MCF 10A (cell line): ENCODE measurements at regions of chr9 and their contacts with region 1.

Region 1: DNA sequence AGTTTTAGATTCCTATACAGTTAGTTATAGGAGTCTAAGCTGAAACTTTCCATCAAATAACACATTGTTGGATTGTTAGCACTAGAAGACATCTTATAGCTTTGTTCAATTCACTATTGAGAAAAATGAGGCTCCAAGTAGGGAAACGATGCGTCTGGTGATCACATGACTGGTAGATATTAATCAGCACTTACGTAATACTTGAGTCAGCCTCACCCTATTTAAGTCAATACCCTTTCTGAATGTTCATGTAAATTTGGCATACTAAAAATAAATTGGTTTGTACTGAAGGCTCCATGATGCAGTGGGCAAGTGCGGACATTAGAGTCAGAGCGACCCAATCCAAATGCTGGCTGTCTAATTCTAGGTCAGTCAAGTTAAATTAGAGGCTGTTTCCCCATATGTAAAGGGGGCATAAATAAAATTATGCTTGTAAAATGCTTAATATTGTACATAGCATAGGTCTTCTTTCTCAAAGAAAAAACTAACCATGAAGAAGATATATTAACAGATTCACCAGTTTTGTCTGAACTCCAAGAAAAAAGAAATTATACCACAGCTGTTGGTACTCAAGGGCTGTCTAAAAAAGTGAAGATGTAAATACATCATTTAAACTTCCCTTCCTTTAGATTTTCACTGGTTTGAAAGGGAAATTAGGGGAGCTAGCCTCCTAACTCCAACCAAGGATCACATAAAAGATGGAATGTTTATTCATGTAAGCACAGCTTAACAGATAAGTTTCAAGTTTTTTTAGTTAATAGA is 406.6 kb upstream of the TLE4 start:
- DNase-seq: peak; percentile 69
- H3K4me3 Mint-ChIP-seq: no peak overlapping the region
- H3K27ac Mint-ChIP-seq: peak overlapping the region; percentile 57
- H3K4me1 Mint-ChIP-seq: peaks cover 18% of the 10 kb centered on the region
- H3K27me3 Mint-ChIP-seq: no peaks in the 10 kb centered on the region
- CTCF ChIP-seq: no peak

Region 2: GRCh38 chr9:79026316-79026715 is 138.9 kb before region 1 on chr9:
- CTCF ChIA-PET with region 1: no interaction called
- POLR2A ChIA-PET with region 1: interaction called, 11 read pairs
- intact Hi-C with region 1: no loop called
- DNase-seq: peak; percentile 67
- H3K4me3 Mint-ChIP-seq: peak overlapping the region; percentile 10
- H3K27ac Mint-ChIP-seq: peak overlapping the region; percentile 78
- H3K4me1 Mint-ChIP-seq: peaks cover 45% of the 10 kb centered on the region
- H3K27me3 Mint-ChIP-seq: no peaks in the 10 kb centered on the region
- CTCF ChIP-seq: no peak

Region 3: DNA sequence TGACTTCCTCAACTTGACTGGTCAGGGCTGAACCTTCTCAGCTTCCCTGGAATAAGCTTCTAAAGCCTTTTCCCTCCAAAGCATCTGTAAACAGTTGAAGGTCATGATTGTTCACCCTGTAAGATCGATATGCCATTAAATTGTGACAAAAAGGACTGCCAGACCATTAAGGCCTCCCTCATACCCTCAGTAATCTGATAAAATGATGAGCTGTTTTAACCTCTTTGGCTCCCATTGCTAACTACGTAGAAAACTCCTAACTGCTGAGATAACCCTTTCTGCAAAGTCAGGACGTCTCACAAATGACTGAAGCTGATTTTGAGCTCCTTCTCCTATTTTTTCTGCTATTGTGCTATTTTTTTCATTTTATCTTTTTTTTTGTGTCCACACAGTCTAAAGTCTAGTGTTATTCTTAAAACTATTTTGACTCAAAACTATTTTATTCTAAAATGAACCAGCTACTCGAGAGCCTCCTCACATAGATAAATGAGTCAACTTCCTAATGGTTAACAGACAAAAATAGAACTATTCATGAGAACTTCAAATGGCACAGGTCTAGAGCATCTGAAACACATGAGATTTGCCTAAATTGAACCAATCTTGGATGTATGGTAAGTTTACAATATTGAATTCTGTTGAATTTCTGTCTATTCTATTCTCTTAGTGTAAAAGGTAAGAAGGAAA is 11.0 kb after region 1 on chr9:
- CTCF ChIA-PET with region 1: no interaction called
- POLR2A ChIA-PET with region 1: interaction called, 12 read pairs
- intact Hi-C with region 1: no loop called
- DNase-seq: no peak
- H3K4me3 Mint-ChIP-seq: no peak overlapping the region
- H3K27ac Mint-ChIP-seq: no peak overlapping the region
- H3K4me1 Mint-ChIP-seq: no peaks in the 10 kb centered on the region
- H3K27me3 Mint-ChIP-seq: no peaks in the 10 kb centered on the region
- CTCF ChIP-seq: no peak

Region 4: GRCh38 chr9:79221084-79221483 is 55.9 kb after region 1 on chr9:
- CTCF ChIA-PET with region 1: interaction called, 3 read pairs
- POLR2A ChIA-PET with region 1: interaction called, 17 read pairs
- intact Hi-C with region 1: loop called (anchors 5 kb)
- DNase-seq: peak; percentile 96
- H3K4me3 Mint-ChIP-seq: no peak overlapping the region
- H3K27ac Mint-ChIP-seq: peak overlapping the region; percentile 22
- H3K4me1 Mint-ChIP-seq: peaks cover 29% of the 10 kb centered on the region
- H3K27me3 Mint-ChIP-seq: no peaks in the 10 kb centered on the region
- CTCF ChIP-seq: no peak

Region 5: GRCh38 chr9:79571309-79572031 is 406.3 kb after region 1 on chr9 and contains the start of gene TLE4:
- CTCF ChIA-PET with region 1: no interaction called
- POLR2A ChIA-PET with region 1: interaction called, 32 read pairs
- intact Hi-C with region 1: no loop called
- DNase-seq: peak; percentile 99
- H3K4me3 Mint-ChIP-seq: no peak within 1 kb of the TSS
- H3K27ac Mint-ChIP-seq: no peak within 1 kb of the TSS
- H3K4me1 Mint-ChIP-seq: peaks cover 17% of the 10 kb centered on the region
- H3K27me3 Mint-ChIP-seq: no peaks in the 10 kb centered on the region
- CTCF ChIP-seq: no peak
- total RNA-seq, gene TLE4: 8.7 and 12.3 TPM in 2 replicates